ENCODE measurements at regions of chr19 and their contacts with region 1.

Region 1: DNA sequence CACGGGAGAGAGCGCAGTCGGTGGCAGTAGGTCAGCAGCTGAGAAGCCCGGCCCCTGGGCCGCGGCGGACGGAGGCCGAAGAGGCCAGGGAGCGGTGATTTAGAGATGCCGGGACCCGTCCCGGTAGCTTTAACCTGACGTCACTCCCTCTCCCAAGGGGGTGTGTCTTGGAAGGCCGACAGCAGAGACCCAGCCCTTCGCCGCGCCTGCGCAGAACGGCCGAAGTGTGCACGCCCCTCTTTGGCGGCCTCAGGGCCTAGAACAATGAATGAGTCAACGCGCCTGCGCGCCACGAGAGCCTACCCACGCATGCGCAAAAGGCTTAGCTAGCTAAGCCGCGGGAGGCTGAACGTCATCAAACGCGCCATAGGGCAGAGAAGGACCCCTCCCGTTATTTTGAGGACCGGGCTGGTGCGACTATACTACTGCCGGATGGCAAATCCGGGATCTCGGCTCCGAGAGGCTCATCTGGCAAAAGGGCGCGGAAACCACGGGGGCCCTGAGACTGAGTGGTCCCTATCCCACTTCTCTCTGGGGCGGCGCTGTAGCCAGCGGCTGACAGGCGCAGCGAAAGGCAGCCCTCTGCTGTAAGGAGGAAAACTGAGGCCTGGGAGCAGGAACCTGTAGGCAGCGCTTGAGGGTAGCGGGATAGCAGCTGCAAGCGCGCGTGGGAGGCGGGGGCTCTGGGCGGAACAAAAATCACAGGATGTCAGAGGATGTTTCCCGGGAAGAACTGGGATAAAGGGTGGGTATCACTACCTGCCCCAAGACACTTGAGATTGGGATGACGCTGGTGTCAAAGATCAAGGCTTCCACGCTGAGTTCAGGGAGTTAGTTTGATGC is at the starts of genes IRGQ and ZNF576:
- DNase-seq: peak; percentile 100
- H3K4me3 Mint-ChIP-seq: peak within 1 kb of the TSS; percentile 97
- H3K27ac Mint-ChIP-seq: peak within 1 kb of the TSS; percentile 97
- H3K4me1 Mint-ChIP-seq: peaks cover 39% of the 10 kb centered on the region
- H3K27me3 Mint-ChIP-seq: no peaks in the 10 kb centered on the region
- total RNA-seq, gene IRGQ: 33.5 and 34.9 TPM in 2 replicates
- total RNA-seq, gene ZNF576: 17.3 and 18.6 TPM in 2 replicates

Region 2: DNA sequence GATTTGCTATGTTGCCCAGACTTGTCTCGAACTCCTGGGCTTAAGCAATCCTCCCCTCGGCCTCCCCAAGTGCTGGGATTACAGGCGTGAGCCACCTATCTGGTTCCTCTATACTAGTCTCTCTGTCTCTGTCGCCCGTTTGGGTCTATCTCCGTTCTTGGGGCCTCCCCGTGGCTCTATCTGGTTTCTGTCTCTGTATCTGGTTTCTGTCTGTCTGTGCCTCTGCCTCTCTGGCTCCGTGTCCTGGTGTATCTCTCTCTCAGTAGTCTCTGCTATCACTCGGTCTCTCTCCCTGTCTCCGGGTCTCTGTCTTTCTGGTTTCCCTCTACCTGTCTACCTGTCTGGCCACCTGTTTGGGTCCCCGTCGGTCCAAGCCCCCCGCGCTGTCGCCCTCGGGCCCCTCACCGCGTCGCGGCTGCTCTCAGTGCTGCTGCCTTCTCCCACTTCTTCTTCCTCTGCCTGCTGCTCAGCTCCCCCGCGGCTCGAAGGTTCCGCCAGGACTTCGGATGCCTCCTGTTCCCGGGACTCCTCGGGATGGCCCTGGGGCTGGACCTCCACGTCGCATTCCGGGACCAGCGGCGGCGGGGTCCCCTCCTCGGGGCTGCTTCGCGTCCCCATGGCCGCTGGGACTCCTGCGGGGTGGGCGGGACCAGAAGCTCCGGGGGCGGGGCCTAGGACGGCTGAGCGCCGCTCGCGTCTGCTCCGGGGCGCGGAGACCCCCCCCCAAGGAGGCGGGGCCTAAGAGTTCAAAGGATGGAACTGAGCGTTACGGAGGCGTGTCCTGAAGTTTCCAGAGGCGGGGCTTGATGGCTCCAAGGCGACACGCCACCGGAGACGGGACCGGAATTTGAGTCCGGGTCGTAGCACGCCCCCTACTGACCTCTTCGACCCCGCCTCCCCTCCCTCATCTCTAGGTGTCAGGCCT is 92.5 kb before region 1 on chr19:
- intact Hi-C with region 1: loop called (anchors 1 kb)
- DNase-seq: peak; percentile 98
- H3K4me3 Mint-ChIP-seq: peak overlapping the region; percentile 88
- H3K27ac Mint-ChIP-seq: peak overlapping the region; percentile 82
- H3K4me1 Mint-ChIP-seq: peaks cover 18% of the 10 kb centered on the region
- H3K27me3 Mint-ChIP-seq: no peaks in the 10 kb centered on the region

Region 3: GRCh38 chr19:43540381-43540780 is 55.8 kb before region 1 on chr19:
- intact Hi-C with region 1: no loop called
- DNase-seq: no peak
- H3K4me3 Mint-ChIP-seq: no peak overlapping the region
- H3K27ac Mint-ChIP-seq: no peak overlapping the region
- H3K4me1 Mint-ChIP-seq: no peaks in the 10 kb centered on the region
- H3K27me3 Mint-ChIP-seq: no peaks in the 10 kb centered on the region

Region 4: DNA sequence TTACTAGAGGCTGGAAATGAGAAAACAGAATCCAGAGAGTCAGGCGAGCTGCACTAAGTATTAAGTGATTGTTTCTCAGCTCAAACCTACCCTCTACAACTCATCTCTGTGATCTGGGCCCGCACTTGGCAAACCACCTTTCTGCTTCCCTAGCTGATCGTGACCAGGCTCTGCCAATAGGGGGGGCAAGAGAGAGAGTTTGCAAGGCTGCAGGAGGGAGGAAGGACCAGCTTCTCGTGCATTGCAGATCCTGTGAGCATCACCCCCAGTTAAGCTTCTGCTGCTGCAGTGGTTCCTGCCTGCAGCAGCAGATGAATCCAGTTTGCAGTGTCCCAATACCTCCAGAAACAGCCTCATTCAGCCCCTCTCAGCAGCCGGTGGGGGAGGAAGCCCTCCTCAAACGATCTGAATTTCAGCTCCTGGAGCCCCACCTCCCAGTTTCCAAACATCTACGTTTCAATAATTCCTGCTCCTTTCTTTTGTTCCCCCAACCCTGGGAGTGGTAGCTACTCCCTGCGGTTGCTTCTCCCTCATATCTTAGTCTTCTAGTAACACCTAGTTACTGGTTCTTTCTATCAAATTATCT is 40.9 kb before region 1 on chr19:
- intact Hi-C with region 1: loop called (anchors 1 kb)
- DNase-seq: peak; percentile 75
- H3K4me3 Mint-ChIP-seq: no peak overlapping the region
- H3K27ac Mint-ChIP-seq: peak overlapping the region; percentile 18
- H3K4me1 Mint-ChIP-seq: peaks cover 9% of the 10 kb centered on the region
- H3K27me3 Mint-ChIP-seq: no peaks in the 10 kb centered on the region

Region 5: DNA sequence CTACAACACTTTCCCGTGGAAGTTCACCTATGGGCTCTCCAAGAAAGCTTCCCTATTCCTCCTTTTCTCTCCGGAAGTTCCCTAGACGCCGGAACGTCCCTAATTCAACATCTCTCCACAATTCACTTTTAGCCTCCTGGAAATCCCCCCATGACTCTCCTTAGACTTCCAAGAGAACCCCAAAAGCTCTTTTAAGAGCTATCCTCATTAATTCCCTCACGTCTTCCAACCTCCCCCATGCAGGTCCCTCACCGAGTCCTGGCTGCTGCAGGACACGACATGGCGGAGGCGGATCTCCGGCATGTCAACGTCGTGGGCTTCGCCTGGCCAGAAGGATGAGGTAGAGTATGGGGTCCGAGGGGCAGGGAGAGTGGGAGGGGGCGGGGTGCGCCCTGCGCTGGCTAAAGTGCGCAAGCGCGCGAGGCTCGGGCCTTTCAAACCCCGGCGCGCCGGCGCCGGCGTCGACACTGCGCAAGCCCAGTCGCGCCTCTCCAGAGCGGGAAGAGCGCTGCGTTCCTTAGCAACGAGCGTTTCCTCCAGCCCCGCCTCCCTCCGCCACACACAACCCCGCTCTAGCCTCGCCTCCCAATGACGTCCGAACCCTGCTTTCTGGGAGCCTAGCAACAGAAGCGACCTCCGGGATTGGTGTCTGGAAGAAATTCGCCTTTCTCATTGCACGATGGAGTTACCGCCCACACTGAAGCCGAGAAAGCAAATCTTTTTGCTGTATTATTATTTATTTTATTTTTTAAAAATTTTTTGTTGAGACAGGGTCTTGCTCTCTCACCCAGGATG is 20.9 kb before region 1 on chr19 and contains the starts of genes PINLYP and XRCC1:
- intact Hi-C with region 1: loop called (anchors 1 kb)
- DNase-seq: peak; percentile 95
- H3K4me3 Mint-ChIP-seq: peak within 1 kb of the TSS; percentile 96
- H3K27ac Mint-ChIP-seq: peak within 1 kb of the TSS; percentile 91
- H3K4me1 Mint-ChIP-seq: peaks cover 25% of the 10 kb centered on the region
- H3K27me3 Mint-ChIP-seq: peaks cover 3% of the 10 kb centered on the region
- total RNA-seq, gene PINLYP: 4.9 and 5.7 TPM in 2 replicates
- total RNA-seq, gene XRCC1: 27.4 and 28.7 TPM in 2 replicates

Region 6: GRCh38 chr19:43754503-43755255 is 158.5 kb after region 1 on chr19 and contains the start of gene SMG9:
- intact Hi-C with region 1: loop called (anchors 1 kb)
- DNase-seq: peak; percentile 99
- H3K4me3 Mint-ChIP-seq: peak within 1 kb of the TSS; percentile 98
- H3K27ac Mint-ChIP-seq: peak within 1 kb of the TSS; percentile 100
- H3K4me1 Mint-ChIP-seq: peaks cover 57% of the 10 kb centered on the region
- H3K27me3 Mint-ChIP-seq: peaks cover 2% of the 10 kb centered on the region
- total RNA-seq, gene SMG9: 86.6 and 89.2 TPM in 2 replicates

Measured in activated T-helper 1 cell treated with anti-CD3 and anti-CD28 coated beads, Interleukin-12 subunit alpha, Interleukin-12 subunit beta, Interleukin-2, Interleukin-4 antibody, amounts not matched to agents 30 ng/mL and 10 ng/mL and 1 ng/mL, durations not matched to agents 14 hours and 24 hours and 36 hours (primary cell).